Activated B cell treated with CpG ODN at 0.5 μM for 24 hours (primary cell): ENCODE measurements at regions of chr6 and their contacts with region 1.

Region 1: DNA sequence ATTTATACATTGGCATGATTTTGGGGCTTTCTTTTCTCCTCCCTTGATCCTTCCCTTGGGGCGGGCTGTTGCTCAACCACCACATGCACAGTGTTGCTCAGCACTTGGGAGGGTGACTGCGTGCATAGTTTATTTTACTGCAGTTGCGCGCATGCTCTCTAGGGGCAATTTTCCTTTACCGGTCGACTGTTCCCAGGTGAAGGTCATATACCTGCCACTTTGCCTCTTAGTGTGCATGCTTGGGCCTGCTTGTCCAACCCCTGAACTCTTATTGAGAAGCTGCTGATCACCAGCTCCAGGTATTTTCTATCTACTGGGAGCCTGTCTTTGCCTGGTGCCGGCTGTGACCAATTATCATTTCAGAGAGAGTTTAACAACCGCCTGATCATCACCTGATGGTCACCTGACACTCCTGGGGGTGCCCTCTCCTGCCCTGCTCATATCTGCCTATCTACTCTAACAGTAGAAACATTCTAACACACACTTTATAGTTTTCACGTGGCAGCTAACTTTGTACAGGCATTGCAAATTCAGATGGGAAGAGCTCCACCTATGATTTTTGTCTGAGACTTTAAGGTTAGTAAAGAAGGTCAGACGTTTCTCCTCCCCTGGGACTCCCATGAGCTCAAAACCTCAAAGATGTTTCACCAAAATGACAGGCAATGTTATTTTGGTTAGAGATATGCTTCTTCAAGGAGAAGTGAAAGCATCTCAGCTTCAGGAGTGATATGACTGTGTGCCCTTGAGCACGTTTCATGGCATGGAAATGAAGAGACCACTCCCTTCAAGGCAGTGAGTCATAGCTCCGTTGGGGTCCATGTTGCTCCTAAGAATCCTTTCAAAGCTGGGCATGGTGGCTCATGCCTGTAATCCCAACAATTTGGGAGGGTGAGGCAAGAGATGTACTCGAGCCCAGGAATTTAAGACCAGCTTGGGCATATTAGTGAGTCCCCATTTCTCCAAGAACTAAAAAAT is 227.5 kb upstream of the MYLIP start:
- DNase-seq: peak; percentile 39
- ATAC-seq: peak; percentile 80
- H3K4me3 Mint-ChIP-seq: peak overlapping the region; percentile 80
- H3K27ac Mint-ChIP-seq: peak overlapping the region; percentile 98
- H3K4me1 Mint-ChIP-seq: peaks cover 83% of the 10 kb centered on the region
- H3K27me3 Mint-ChIP-seq: no peaks in the 10 kb centered on the region
- CTCF ChIP-seq: no peak

Region 2: DNA sequence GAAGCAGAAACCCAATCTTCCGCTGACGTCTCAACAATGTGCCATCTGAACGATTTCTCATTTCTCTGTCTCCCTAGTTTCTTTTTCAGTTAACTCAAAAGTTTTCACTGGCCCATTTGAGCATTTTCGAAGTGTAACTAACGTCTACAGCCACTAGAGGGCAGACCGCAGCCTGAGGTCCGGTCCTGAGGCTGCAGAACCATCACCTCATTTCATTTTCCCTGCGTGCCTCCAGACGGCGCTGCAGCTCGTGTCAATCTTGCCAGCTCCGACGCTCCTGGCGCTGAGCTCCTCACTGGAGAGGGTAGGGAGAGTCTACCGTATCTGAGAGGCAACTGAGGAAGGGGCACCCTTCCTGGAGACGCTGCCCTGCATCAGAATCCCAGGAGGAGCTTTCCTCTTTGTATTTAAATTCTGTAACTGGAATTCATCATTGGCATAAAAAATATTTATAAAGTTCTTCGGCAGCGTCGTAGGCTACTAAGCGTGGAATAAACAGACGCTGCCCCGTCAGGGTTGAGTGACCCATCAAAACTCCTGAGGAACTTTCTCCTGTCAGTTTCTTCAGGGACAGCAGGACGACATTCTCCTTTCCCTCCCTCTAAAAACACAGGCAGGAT is 210.1 kb before region 1 on chr6:
- CTCF ChIA-PET with region 1: interaction called, 21 read pairs
- POLR2A ChIA-PET with region 1: no interaction called
- intact Hi-C with region 1: loop called (anchors 1 kb)
- DNase-seq: peak; percentile 64
- ATAC-seq: peak; percentile 99
- H3K4me3 Mint-ChIP-seq: peak overlapping the region; percentile 17
- H3K27ac Mint-ChIP-seq: no peak overlapping the region
- H3K4me1 Mint-ChIP-seq: peaks cover 9% of the 10 kb centered on the region
- H3K27me3 Mint-ChIP-seq: peaks cover 2% of the 10 kb centered on the region
- CTCF ChIP-seq: peak; percentile 95

Region 3: GRCh38 chr6:15887491-15888461 is 13.7 kb before region 1 on chr6:
- CTCF ChIA-PET with region 1: interaction called, 5 read pairs
- POLR2A ChIA-PET with region 1: interaction called, 13 read pairs
- intact Hi-C with region 1: loop called (anchors 1 kb)
- DNase-seq: no peak
- ATAC-seq: peak; percentile 77
- H3K4me3 Mint-ChIP-seq: peak overlapping the region; percentile 50
- H3K27ac Mint-ChIP-seq: peak overlapping the region; percentile 89
- H3K4me1 Mint-ChIP-seq: peaks cover 27% of the 10 kb centered on the region
- H3K27me3 Mint-ChIP-seq: no peaks in the 10 kb centered on the region
- CTCF ChIP-seq: no peak

Region 4: GRCh38 chr6:16019462-16019861 is 118.0 kb after region 1 on chr6:
- CTCF ChIA-PET with region 1: no interaction called
- POLR2A ChIA-PET with region 1: no interaction called
- intact Hi-C with region 1: no loop called
- DNase-seq: no peak
- ATAC-seq: no peak
- H3K4me3 Mint-ChIP-seq: no peak overlapping the region
- H3K27ac Mint-ChIP-seq: no peak overlapping the region
- H3K4me1 Mint-ChIP-seq: no peaks in the 10 kb centered on the region
- H3K27me3 Mint-ChIP-seq: no peaks in the 10 kb centered on the region
- CTCF ChIP-seq: no peak

Region 5: DNA sequence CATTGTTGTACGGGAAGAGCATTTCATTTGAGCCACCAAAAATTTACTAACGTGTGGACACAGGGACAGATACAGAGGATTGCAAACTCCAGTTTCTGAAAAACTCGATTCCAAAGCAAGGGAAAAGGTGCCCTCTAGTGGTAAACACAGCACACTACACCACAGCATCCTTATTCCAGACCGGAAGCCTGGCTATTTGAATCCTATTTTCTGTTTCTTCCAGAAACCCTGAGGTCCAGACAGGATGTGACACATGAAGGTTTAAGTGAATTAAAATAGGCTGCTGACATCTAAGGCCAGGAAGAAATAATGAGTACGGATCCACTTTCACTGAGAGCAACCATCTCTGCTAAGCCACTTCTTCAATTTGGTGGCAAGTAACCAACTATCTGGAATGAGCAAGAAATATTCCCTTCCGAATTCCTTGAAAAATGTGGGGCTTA is 305.2 kb after region 1 on chr6:
- CTCF ChIA-PET with region 1: no interaction called
- POLR2A ChIA-PET with region 1: no interaction called
- intact Hi-C with region 1: loop called (anchors 1 kb)
- DNase-seq: no peak
- ATAC-seq: peak; percentile 48
- H3K4me3 Mint-ChIP-seq: peak overlapping the region; percentile 32
- H3K27ac Mint-ChIP-seq: peak overlapping the region; percentile 31
- H3K4me1 Mint-ChIP-seq: peaks cover 27% of the 10 kb centered on the region
- H3K27me3 Mint-ChIP-seq: peaks cover 14% of the 10 kb centered on the region
- CTCF ChIP-seq: peak; percentile 85